ENCODE measurements at regions of chr7 and their contacts with region 1.

Region 1: GRCh38 chr7:36048141-36048901 is 104.7 kb upstream of the EEPD1 start:
- DNase-seq: no peak

Region 2: GRCh38 chr7:36216063-36216684 is 167.9 kb after region 1 on chr7:
- intact Hi-C with region 1: loop called in 1 of 2 experiments (anchors 10 kb)
- DNase-seq: no peak